K562 (cell line): ENCODE measurements at regions of chr10 and their contacts with region 1.

Region 1: GRCh38 chr10:72098301-72099053 is 10.1 kb upstream of the SPOCK2 start:
- DNase-seq: peak in 2 of 4 experiments; percentile 42 to 69
- ATAC-seq: peak; percentile 70
- H3K4me3 ChIP-seq: no peak overlapping the region
- H3K27ac ChIP-seq: peak overlapping the region; percentile 63
- H3K4me1 ChIP-seq: peaks cover 15 to 37% of the 10 kb centered on the region in 2 experiments
- H3K27me3 ChIP-seq: no peaks in the 10 kb centered on the region
- CTCF ChIP-seq: no peak
- EP300 ChIP-seq: peak; percentile 73
- POLR2A ChIP-seq: no peak
- RAD21 ChIP-seq: no peak

Region 2: GRCh38 chr10:72108830-72109631 is 10.6 kb after region 1 on chr10:
- CTCF ChIA-PET with region 1: no interaction called
- POLR2A ChIA-PET with region 1: interaction called, 10 read pairs
- in situ Hi-C with region 1: no loop called
- intact Hi-C with region 1: no loop called
- DNase-seq: no peak
- ATAC-seq: no peak
- H3K4me3 ChIP-seq: no peak overlapping the region
- H3K27ac ChIP-seq: no peak overlapping the region
- H3K4me1 ChIP-seq: no peaks in the 10 kb centered on the region
- H3K27me3 ChIP-seq: no peaks in the 10 kb centered on the region
- CTCF ChIP-seq: no peak
- EP300 ChIP-seq: no peak
- POLR2A ChIP-seq: no peak
- RAD21 ChIP-seq: no peak